ENCODE measurements at regions of chr1 and their contacts with region 1.

Region 1: DNA sequence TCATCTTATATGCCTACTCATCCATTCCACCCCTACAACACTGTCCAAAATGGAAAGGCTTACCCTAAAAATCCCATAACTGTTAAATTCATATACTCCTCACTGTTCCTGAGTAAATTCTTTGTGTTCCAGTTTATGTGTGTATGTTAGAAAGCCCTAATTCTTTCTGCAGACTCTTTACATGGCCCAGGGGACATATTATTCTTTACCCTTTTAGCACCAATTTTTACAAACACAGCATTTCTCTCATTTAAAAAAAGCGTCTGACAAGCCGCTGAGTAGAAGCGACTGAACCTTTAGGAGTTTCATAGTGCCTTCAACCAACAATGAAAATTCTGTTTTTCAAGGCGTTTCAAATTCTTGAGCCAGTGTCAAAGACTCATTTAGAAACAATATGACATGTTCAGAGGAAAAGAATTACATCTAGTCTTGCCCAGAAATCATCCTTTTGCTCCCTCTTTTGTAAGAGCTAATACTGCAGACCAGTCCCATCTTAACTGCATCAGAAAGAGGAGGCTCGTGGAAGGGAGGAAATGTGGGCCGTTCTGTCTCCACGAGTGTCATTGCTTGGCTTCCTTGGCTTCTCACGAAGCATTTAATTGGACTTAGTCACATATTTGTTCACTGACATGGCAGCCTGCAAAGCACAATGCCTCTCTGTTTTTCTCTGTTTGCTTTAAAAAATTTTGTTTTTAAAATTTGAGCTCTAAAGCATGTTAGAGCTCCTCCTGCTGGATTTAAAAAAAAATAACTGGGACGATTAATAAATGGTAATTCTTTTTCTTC is 21.3 kb upstream of the C1orf105 start:
- DNase-seq: peak in 5 of 9 experiments; percentile 16 to 62 (median 47)
- ATAC-seq: peak; percentile 54
- H3K4me3 ChIP-seq: no peak overlapping the region
- H3K4me3 Mint-ChIP-seq: peak overlapping the region; percentile 63
- H3K27ac ChIP-seq: no peak overlapping the region
- H3K27ac Mint-ChIP-seq: peak overlapping the region; percentile 86
- H3K4me1 ChIP-seq: peaks cover 49% of the 10 kb centered on the region
- H3K4me1 Mint-ChIP-seq: peaks cover 68% of the 10 kb centered on the region
- H3K27me3 ChIP-seq: no peaks in the 10 kb centered on the region
- H3K27me3 Mint-ChIP-seq: no peaks in the 10 kb centered on the region
- CTCF ChIP-seq: peak; percentile 78

Region 2: DNA sequence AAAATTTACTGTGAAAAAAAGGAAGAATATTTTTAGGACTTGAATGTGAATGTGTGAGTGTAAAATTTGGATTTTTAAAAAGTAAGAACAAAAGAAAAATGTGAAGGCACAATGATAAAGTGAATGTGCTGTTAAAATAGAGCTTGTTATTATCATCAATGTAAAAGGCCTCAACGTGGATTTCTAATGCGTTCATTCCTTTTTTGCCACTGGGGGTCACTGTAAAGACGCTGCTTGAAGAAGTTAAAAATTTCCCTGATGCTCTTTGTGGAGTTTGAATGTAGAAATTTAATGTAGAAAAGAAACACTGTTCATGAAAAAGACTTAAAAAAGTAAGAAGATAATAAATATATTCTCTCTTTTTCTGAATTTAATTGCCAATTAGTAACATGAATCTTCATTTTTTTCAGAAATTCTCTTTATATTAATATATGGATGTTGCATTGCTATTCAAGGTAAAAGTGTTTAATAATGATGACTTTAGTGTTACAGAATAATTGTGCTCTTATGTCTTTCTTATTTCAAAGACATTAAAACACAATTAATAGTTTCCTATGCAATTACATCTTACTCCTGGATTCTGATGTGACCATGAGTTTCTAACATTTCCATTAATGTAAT is 396.3 kb before region 1 on chr1:
- CTCF ChIA-PET with region 1: interaction called, 12 read pairs
- POLR2A ChIA-PET with region 1: interaction called, 4 read pairs
- intact Hi-C with region 1: loop called (anchors 1 to 2 kb)
- DNase-seq: peak in 4 of 9 experiments; percentile 9 to 66 (median 36)
- ATAC-seq: peak; percentile 44
- H3K4me3 ChIP-seq: no peak overlapping the region
- H3K4me3 Mint-ChIP-seq: no peak overlapping the region
- H3K27ac ChIP-seq: no peak overlapping the region
- H3K27ac Mint-ChIP-seq: no peak overlapping the region
- H3K4me1 ChIP-seq: no peaks in the 10 kb centered on the region
- H3K4me1 Mint-ChIP-seq: no peaks in the 10 kb centered on the region
- H3K27me3 ChIP-seq: no peaks in the 10 kb centered on the region
- H3K27me3 Mint-ChIP-seq: peaks cover under 1% of the 10 kb centered on the region
- CTCF ChIP-seq: peak; percentile 72

Region 3: DNA sequence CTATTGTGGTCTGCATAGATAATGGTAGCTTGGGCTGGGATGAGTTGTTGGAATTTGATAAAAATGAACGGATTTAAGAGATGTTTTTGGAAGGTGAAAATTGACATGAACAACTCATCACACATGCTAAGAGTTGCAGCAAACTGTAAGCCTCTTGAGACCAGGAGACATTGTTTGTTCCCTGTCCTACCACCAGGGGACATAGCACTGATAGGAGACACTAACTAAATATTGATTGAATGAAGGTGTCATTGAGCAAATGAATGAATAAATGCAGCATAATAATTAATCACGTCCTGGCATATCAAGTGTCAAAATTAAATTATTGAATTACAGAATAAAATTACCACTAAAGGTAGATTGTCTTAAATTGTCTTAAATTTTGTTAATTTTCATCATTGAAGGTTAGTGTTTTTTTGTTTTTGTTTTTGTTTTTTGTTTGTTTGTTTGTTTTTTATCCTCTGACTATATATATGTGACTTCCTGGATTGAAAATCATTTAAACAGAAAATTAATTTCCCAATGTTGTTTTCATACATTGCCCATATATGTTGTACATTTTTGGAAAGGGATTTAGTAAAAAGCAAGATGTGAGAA is 264.0 kb before region 1 on chr1:
- CTCF ChIA-PET with region 1: interaction called, 10 read pairs
- POLR2A ChIA-PET with region 1: no interaction called
- intact Hi-C with region 1: loop called (anchors 1 kb)
- DNase-seq: peak in 3 of 9 experiments; percentile 25 to 66 (median 53)
- ATAC-seq: peak; percentile 34
- H3K4me3 ChIP-seq: no peak overlapping the region
- H3K4me3 Mint-ChIP-seq: no peak overlapping the region
- H3K27ac ChIP-seq: no peak overlapping the region
- H3K27ac Mint-ChIP-seq: no peak overlapping the region
- H3K4me1 ChIP-seq: no peaks in the 10 kb centered on the region
- H3K4me1 Mint-ChIP-seq: peaks cover 2% of the 10 kb centered on the region
- H3K27me3 ChIP-seq: no peaks in the 10 kb centered on the region
- H3K27me3 Mint-ChIP-seq: no peaks in the 10 kb centered on the region
- CTCF ChIP-seq: peak; percentile 57

Region 4: GRCh38 chr1:172357753-172358385 is 41.3 kb before region 1 on chr1:
- CTCF ChIA-PET with region 1: interaction called, 13 read pairs
- POLR2A ChIA-PET with region 1: interaction called, 14 read pairs
- intact Hi-C with region 1: loop called in 1 of 2 experiments (anchors 2 kb)
- DNase-seq: peak in 2 of 9 experiments; percentile 23 to 39
- ATAC-seq: peak; percentile 17
- H3K4me3 ChIP-seq: no peak overlapping the region
- H3K4me3 Mint-ChIP-seq: peak overlapping the region; percentile 40
- H3K27ac ChIP-seq: peak overlapping the region in 1 of 2 experiments; percentile 77
- H3K27ac Mint-ChIP-seq: peak overlapping the region; percentile 82
- H3K4me1 ChIP-seq: peaks cover 35% of the 10 kb centered on the region
- H3K4me1 Mint-ChIP-seq: peaks cover 54% of the 10 kb centered on the region
- H3K27me3 ChIP-seq: no peaks in the 10 kb centered on the region
- H3K27me3 Mint-ChIP-seq: no peaks in the 10 kb centered on the region
- CTCF ChIP-seq: no peak

Region 5: GRCh38 chr1:172414331-172414730 is 15.2 kb after region 1 on chr1:
- CTCF ChIA-PET with region 1: interaction called, 12 read pairs
- POLR2A ChIA-PET with region 1: no interaction called
- intact Hi-C with region 1: no loop called
- DNase-seq: no peak
- ATAC-seq: no peak
- H3K4me3 ChIP-seq: no peak overlapping the region
- H3K4me3 Mint-ChIP-seq: no peak overlapping the region
- H3K27ac ChIP-seq: no peak overlapping the region
- H3K27ac Mint-ChIP-seq: no peak overlapping the region
- H3K4me1 ChIP-seq: no peaks in the 10 kb centered on the region
- H3K4me1 Mint-ChIP-seq: peaks cover 9% of the 10 kb centered on the region
- H3K27me3 ChIP-seq: no peaks in the 10 kb centered on the region
- H3K27me3 Mint-ChIP-seq: no peaks in the 10 kb centered on the region
- CTCF ChIP-seq: no peak

Region 6: DNA sequence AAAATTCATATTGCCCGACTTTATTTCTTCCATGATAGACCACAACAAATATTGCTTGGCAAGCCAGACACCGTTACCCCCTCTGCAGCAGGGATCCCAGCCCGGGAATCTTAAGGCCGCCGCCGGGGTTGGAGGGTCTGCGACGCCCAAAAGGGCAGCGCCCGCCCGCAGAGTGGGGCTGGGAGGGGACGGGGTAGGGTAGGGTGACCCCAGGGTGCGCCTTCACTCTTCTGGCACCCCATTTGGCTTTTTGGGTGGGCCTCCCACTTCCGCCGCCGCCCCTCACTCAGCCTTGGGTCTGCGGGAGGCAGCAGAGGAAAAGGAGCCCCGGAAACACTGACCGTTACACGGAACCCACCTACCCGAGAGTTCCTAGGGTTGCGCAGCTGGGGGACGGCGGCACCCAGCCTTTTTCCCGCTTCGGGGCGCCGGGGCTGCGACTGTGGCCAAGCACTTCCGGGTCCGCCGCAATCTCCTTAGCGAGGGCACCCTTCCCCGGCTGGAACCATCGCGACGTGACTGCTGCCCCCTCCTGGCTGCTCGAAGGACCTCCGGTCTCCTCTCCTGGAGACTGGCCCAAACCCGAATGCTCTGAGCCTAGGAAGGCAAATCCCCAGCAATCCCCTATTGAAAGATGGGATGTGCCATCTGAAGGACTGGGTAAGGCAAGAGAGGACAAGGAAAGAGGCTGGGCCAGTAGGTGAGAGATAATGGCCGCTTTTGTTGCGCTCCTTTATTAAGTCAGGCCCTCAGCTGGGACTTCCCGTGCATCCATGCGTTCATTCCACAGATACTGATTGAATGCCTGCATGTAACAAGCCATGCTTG is 44.7 kb after region 1 on chr1 and contains the start of gene PIGC:
- CTCF ChIA-PET with region 1: interaction called, 14 read pairs
- POLR2A ChIA-PET with region 1: interaction called, 6 read pairs
- intact Hi-C with region 1: loop called in 1 of 2 experiments (anchors 2 kb)
- DNase-seq: peak; percentile 83 to 94 (median 93)
- ATAC-seq: peak; percentile 99
- H3K4me3 ChIP-seq: peak within 1 kb of the TSS; percentile 78 to 90
- H3K4me3 Mint-ChIP-seq: peak within 1 kb of the TSS; percentile 96
- H3K27ac ChIP-seq: peak within 1 kb of the TSS; percentile 71 to 83
- H3K27ac Mint-ChIP-seq: peak within 1 kb of the TSS; percentile 95
- H3K4me1 ChIP-seq: peaks cover 25% of the 10 kb centered on the region
- H3K4me1 Mint-ChIP-seq: peaks cover 45% of the 10 kb centered on the region
- H3K27me3 ChIP-seq: no peaks in the 10 kb centered on the region
- H3K27me3 Mint-ChIP-seq: no peaks in the 10 kb centered on the region
- CTCF ChIP-seq: peak; percentile 77
- total RNA-seq, gene PIGC: 22.1 to 23.2 TPM